Activated T-helper 2 cell treated with anti-CD3 and anti-CD28 coated beads, Interferon-gamma antibody, Interleukin-2, Interleukin-4, amounts not matched to agents 10 μg/mL and 5 μg/mL and 100 μg/mL, durations not matched to agents 14 hours and 24 hours and 36 hours (primary cell): ENCODE measurements at regions of chr3 and their contacts with region 1.

Region 1: DNA sequence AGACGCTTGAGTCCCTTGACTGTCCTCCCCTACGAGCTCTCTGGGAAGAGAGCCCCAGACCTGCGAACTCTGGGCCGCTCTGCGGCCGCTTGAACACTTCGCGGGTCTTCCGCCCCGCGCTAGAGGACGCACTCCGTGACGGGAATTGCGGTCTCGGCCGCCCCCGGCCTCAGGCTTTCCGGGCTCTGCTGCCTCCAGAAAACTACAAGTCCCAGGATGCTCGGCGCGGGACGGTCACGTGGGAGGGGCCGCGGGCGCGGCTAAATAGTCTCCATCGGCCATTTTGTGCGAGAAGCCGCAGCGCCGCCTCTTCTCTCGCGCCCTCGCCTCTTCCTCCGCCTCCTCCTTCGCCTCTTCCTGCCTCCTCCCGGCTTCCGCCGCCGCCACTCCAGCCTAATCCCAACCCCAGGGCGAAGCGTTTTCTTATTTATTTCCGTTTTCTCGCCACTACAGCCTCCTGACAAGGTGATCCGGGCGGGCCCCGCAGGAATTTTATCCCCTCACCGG is at the start of gene EIF1B:
- DNase-seq: peak; percentile 98
- H3K4me3 Mint-ChIP-seq: peak within 1 kb of the TSS; percentile 100
- H3K27ac Mint-ChIP-seq: peak within 1 kb of the TSS; percentile 97
- H3K4me1 Mint-ChIP-seq: peaks cover 20% of the 10 kb centered on the region
- H3K27me3 Mint-ChIP-seq: no peaks in the 10 kb centered on the region
- total RNA-seq, gene EIF1B: 42.3 and 48.1 TPM in 2 replicates

Region 2: GRCh38 chr3:39718674-39719595 is 590.5 kb before region 1 on chr3:
- intact Hi-C with region 1: loop called (anchors 2 kb)
- DNase-seq: no peak
- H3K4me3 Mint-ChIP-seq: no peak overlapping the region
- H3K27ac Mint-ChIP-seq: no peak overlapping the region
- H3K4me1 Mint-ChIP-seq: no peaks in the 10 kb centered on the region
- H3K27me3 Mint-ChIP-seq: no peaks in the 10 kb centered on the region

Region 3: DNA sequence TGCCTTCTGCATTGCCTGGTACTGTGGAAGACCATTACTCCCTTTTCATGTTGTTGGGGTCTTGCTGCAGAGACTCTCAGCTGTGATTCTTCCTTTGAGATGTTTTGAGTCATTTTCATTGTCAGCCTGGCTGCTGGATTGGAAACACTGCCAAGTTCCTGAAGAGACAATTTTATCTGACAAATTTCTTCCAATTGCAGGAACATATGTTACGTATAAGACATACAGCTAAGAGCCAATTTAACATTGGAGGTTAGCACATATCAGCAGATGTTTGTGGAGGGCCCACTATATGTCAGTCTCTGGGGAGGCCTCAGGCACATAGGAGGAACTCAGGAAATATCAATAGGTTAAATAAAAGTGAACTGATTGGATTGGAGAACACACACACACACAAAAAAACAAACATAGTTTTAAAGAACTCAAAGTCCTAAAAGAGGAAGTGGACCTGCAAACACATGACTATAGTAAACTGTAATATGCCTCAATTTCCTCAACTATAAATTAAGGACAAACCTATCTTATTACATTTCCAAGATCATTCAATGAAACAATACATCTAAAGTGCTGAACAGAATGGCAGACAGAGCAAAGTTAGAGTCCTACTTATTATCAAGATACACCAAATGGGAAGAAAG is 327.8 kb before region 1 on chr3:
- intact Hi-C with region 1: no loop called
- DNase-seq: no peak
- H3K4me3 Mint-ChIP-seq: no peak overlapping the region
- H3K27ac Mint-ChIP-seq: no peak overlapping the region
- H3K4me1 Mint-ChIP-seq: no peaks in the 10 kb centered on the region
- H3K27me3 Mint-ChIP-seq: no peaks in the 10 kb centered on the region

Region 4: DNA sequence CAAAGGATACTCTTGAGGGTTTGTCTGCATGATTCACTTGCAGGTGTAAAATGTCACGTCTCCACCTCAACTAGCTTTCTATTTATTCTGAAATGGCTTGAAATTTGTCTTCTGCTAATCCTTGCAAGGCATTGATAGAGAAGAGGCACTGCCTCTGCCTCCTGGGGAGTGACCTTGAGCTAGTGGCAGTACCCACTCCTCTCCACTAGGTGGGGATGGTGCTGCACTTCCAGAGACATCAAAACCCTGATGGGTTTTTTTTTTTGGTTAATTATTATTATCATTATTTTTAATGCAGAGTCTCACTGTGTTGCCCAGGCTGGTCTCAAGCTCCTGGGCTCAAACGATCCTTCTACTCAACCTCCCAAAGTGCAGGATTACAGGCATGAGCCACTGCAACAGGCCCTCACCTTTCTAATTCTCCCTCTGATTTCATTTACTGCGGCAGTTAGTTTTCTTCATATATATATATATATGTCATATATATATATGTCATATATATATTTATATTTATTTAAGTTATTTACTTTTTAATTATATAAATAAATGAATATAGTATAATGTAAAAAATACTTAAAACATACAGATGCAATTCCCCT is 117.5 kb before region 1 on chr3:
- intact Hi-C with region 1: no loop called
- DNase-seq: peak; percentile 24
- H3K4me3 Mint-ChIP-seq: no peak overlapping the region
- H3K27ac Mint-ChIP-seq: no peak overlapping the region
- H3K4me1 Mint-ChIP-seq: no peaks in the 10 kb centered on the region
- H3K27me3 Mint-ChIP-seq: peaks cover 3% of the 10 kb centered on the region

Region 5: DNA sequence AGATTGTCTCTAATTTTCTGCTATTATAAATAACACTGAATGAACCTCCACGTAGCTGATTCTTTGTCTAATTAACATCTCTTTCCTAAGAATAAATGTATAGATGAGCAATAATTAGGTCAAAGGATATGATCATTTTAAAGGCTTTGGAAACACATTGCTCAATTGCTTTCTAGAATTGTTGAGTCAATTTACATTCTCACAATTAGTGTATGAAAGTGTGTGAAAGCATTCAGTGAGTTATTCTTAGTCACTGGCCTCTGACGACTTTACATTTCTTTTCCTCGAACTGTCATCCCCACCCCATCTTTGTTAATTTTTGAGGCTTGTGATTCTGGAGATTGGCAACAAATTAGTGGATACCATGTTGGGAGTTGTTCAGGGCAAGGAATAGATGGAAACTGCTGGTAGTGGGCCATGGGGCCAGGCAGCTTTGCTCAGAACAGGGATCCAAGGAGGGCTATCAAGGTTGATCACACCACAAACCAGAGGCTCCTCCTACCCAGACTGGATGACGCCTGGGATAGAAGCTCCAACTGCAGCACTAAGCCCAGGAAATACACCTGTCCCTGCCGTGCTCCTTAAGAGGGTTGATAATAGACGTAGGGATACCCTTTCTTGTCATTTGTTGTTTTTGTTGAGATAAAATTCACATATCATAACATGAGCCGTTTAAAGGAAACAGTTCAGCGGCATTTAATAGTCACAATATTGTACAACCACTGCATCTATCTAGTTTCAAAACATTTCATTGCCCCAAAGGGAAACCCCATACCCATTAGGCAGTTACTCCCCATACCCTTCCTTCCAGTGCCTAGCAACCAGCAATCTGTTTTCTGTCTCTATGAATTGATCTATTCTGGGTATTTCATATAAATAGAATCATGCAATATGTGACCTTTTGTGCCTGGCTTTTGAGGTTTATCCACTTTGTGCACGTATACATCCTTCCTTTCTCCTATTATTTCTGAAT is 28.0 kb after region 1 on chr3:
- intact Hi-C with region 1: loop called (anchors 2 kb)
- DNase-seq: no peak
- H3K4me3 Mint-ChIP-seq: no peak overlapping the region
- H3K27ac Mint-ChIP-seq: peak overlapping the region; percentile 87
- H3K4me1 Mint-ChIP-seq: peaks cover 19% of the 10 kb centered on the region
- H3K27me3 Mint-ChIP-seq: peaks cover 2% of the 10 kb centered on the region

Region 6: GRCh38 chr3:40524568-40525285 is 215.3 kb after region 1 on chr3 and contains the start of gene ZNF621:
- intact Hi-C with region 1: loop called (anchors 1 kb)
- DNase-seq: peak; percentile 80
- H3K4me3 Mint-ChIP-seq: peak within 1 kb of the TSS; percentile 95
- H3K27ac Mint-ChIP-seq: peak within 1 kb of the TSS; percentile 96
- H3K4me1 Mint-ChIP-seq: peaks cover 22% of the 10 kb centered on the region
- H3K27me3 Mint-ChIP-seq: no peaks in the 10 kb centered on the region
- total RNA-seq, gene ZNF621: 21.4 and 23.9 TPM in 2 replicates

Region 7: GRCh38 chr3:41961750-41962679 is 1652.5 kb after region 1 on chr3 and contains the start of gene ULK4:
- intact Hi-C with region 1: loop called (anchors 5 kb)
- DNase-seq: peak; percentile 94
- H3K4me3 Mint-ChIP-seq: peak within 1 kb of the TSS; percentile 96
- H3K27ac Mint-ChIP-seq: peak within 1 kb of the TSS; percentile 90
- H3K4me1 Mint-ChIP-seq: peaks cover 19% of the 10 kb centered on the region
- H3K27me3 Mint-ChIP-seq: peaks cover under 1% of the 10 kb centered on the region
- total RNA-seq, gene ULK4: 7.5 and 8.1 TPM in 2 replicates